ENCODE measurements at regions of chr13 and their contacts with region 1.

Region 1: GRCh38 chr13:45257638-45258338 is 56.9 kb upstream of the KCTD4 start:
- DNase-seq: no peak
- ATAC-seq: no peak
- H3K4me3 ChIP-seq: no peak overlapping the region
- H3K4me3 Mint-ChIP-seq: no peak overlapping the region
- H3K27ac ChIP-seq: no peak overlapping the region
- H3K27ac Mint-ChIP-seq: peak overlapping the region; percentile 22 to 52
- H3K4me1 ChIP-seq: no peaks in the 10 kb centered on the region
- H3K4me1 Mint-ChIP-seq: peaks cover 5 to 17% (median 11%) of the 10 kb centered on the region in 3 donors
- H3K27me3 ChIP-seq: no peaks in the 10 kb centered on the region
- H3K27me3 Mint-ChIP-seq: no peaks in the 10 kb centered on the region

Region 2: GRCh38 chr13:45194081-45194939 is 63.5 kb before region 1 on chr13:
- CTCF ChIA-PET with region 1: interaction called in 1 of 2 experiments, 12 read pairs
- POLR2A ChIA-PET with region 1: no interaction called
- DNase-seq: no peak
- ATAC-seq: no peak
- H3K4me3 ChIP-seq: no peak overlapping the region
- H3K4me3 Mint-ChIP-seq: no peak overlapping the region
- H3K27ac ChIP-seq: no peak overlapping the region
- H3K27ac Mint-ChIP-seq: no peak overlapping the region
- H3K4me1 ChIP-seq: no peaks in the 10 kb centered on the region
- H3K4me1 Mint-ChIP-seq: peaks cover 0 to 12% (median 2%) of the 10 kb centered on the region in 3 donors
- H3K27me3 ChIP-seq: no peaks in the 10 kb centered on the region
- H3K27me3 Mint-ChIP-seq: no peaks in the 10 kb centered on the region

Region 3: DNA sequence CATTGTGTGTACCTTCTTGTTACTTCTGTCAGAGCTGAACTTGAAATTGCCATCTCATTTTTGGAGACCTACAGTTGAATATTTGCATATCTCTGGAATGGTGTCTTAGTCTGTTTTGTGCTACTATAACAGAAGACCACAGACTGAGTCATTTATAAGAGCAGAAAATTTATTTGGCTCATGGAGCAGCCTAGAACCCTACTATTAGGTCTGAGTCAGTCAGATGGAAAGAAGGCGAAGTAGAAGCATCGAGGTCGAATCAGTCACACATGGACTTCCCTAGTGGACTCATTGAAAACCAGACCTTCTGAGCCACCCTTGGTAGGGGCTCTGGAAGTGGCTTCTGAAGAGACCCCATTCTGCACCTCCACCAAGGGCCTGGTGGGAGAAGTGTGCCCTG is 117.1 kb after region 1 on chr13:
- CTCF ChIA-PET with region 1: no interaction called
- POLR2A ChIA-PET with region 1: no interaction called
- DNase-seq: no peak
- ATAC-seq: no peak
- H3K4me3 ChIP-seq: no peak overlapping the region
- H3K4me3 Mint-ChIP-seq: no peak overlapping the region
- H3K27ac ChIP-seq: no peak overlapping the region
- H3K27ac Mint-ChIP-seq: no peak overlapping the region
- H3K4me1 ChIP-seq: peaks cover 2 to 8% of the 10 kb centered on the region in 2 experiments
- H3K4me1 Mint-ChIP-seq: peaks cover 19 to 25% (median 24%) of the 10 kb centered on the region in 3 donors
- H3K27me3 ChIP-seq: no peaks in the 10 kb centered on the region
- H3K27me3 Mint-ChIP-seq: no peaks in the 10 kb centered on the region